Gastrocnemius medialis (tissue), 4 donors: ENCODE measurements at regions of chr1 and their contacts with region 1.

Region 1: GRCh38 chr1:171741872-171742576 is at the start of gene VAMP4:
- DNase-seq: peak; percentile 82 to 84
- ATAC-seq: peak; percentile 87
- H3K4me3 ChIP-seq: peak within 1 kb of the TSS; percentile 84 to 97 (median 94)
- H3K27ac ChIP-seq: peak within 1 kb of the TSS; percentile 95 to 99 (median 98)
- H3K4me1 ChIP-seq: peaks cover 24 to 30% of the 10 kb centered on the region in 2 donors
- H3K27me3 ChIP-seq: no peaks in the 10 kb centered on the region
- CTCF ChIP-seq: peak in 2 of 5 experiments; percentile 1 to 18
- POLR2A ChIP-seq: peak; percentile 86 to 87
- total RNA-seq, gene VAMP4: 4.6 to 11.1 (median 5.0) TPM

Region 2: DNA sequence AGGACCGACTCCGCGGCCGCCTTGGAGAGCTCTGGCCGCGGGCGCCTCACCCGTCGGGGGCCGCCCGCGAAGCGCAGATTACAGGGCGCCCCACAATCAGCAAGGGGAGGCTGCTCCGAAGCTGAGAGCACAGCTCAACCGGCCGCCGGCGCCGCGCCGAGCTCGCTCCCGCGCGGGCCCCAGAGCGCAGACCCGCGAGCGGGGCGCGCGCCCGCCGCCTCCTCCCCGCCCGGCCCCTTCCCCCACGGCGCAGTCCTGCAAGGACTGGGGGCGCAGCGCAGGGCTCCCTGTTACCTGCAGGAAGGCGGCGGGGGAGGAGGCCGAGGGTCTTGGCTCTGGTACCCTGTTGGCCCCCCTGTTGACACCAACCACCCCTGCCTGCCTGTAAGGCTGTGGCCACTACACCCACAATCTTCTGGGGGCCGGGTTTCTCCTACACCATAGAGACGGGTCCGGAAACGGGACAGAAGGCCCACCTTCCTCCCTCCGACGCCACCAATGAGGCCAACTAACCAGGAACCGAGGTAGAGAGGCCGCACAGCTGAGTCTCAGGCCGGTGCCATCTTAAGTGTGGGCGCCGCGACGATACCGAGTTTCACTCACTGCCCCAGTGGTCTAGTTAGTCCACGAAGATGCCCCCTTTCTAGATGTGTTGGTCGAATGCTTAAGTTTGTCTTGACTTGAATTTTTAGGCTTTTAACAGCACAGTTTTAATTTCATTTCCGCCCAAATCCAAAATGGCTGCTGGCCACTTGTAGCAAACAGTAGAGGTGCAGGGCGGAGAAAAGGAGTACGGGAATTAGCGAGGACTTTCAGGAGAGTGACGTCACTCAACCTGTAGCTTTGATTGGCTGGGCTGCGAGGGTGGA is 1848.3 kb before region 1 on chr1 and contains the start of gene SCYL3:
- in situ Hi-C with region 1: no loop called
- intact Hi-C with region 1: loop called (anchors 10 kb)
- DNase-seq: peak; percentile 94
- ATAC-seq: peak; percentile 98 to 99
- H3K4me3 ChIP-seq: peak within 1 kb of the TSS; percentile 74 to 99 (median 96)
- H3K27ac ChIP-seq: peak within 1 kb of the TSS; percentile 87 to 98 (median 94)
- H3K4me1 ChIP-seq: peaks cover 11 to 24% of the 10 kb centered on the region in 2 donors
- H3K27me3 ChIP-seq: peaks cover 0 to 3% (median 0%) of the 10 kb centered on the region in 3 donors
- CTCF ChIP-seq: no peak
- POLR2A ChIP-seq: peak; percentile 48 to 63
- total RNA-seq, gene SCYL3: 6.2 to 14.3 (median 12.8) TPM

Region 3: DNA sequence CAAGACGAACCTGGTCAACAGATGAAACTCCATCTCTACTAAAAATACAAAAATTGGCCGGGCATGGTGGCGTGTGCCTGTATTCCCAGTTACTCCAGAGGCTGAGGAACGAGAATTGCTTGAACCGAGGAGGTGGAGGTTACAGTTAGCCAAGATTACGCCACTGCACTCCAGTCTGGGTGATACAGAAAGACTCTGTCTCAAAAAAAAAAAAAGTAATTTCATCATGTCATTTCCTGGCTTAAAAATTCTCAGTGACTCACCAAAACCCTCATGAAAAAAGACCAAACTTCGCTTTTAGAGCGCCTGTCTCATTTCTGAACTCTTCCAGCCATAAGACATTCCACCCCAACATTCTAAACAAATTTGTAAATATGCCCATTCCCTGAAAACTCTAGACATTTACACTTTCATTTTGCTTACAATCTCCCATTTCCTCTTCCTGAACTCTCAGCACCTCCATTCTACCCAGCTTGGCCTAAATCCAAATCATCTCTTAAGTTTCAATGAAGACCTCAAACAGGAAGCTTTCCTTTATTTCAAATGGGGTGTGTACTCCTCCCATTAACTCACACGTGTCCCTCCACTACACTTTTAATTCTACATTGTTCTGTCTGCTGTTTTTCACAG is 307.2 kb before region 1 on chr1:
- in situ Hi-C with region 1: no loop called
- intact Hi-C with region 1: no loop called
- DNase-seq: peak in 1 of 2 donors; percentile 25
- ATAC-seq: peak in 1 of 2 donors; percentile 64
- H3K4me3 ChIP-seq: peak overlapping the region in 1 of 4 donors; percentile 17
- H3K27ac ChIP-seq: peak overlapping the region; percentile 1 to 56 (median 36)
- H3K4me1 ChIP-seq: no peaks in the 10 kb centered on the region
- H3K27me3 ChIP-seq: no peaks in the 10 kb centered on the region
- CTCF ChIP-seq: no peak
- POLR2A ChIP-seq: no peak

Region 4: GRCh38 chr1:171485375-171486047 is 256.5 kb before region 1 on chr1 and contains the start of gene PRRC2C:
- in situ Hi-C with region 1: loop called in 2 of 4 experiments (anchors 10 to 25 kb)
- intact Hi-C with region 1: loop called (anchors 1 kb)
- DNase-seq: peak; percentile 97
- ATAC-seq: peak; percentile 97 to 98
- H3K4me3 ChIP-seq: peak within 1 kb of the TSS; percentile 70 to 100 (median 96)
- H3K27ac ChIP-seq: peak within 1 kb of the TSS; percentile 92 to 100 (median 98)
- H3K4me1 ChIP-seq: peaks cover 39 to 42% of the 10 kb centered on the region in 2 donors
- H3K27me3 ChIP-seq: no peaks in the 10 kb centered on the region
- CTCF ChIP-seq: peak in 4 of 5 experiments; percentile 69 to 83 (median 80)
- POLR2A ChIP-seq: peak; percentile 77 to 78
- total RNA-seq, gene PRRC2C: 40.9 to 45.7 (median 42.0) TPM

Region 5: DNA sequence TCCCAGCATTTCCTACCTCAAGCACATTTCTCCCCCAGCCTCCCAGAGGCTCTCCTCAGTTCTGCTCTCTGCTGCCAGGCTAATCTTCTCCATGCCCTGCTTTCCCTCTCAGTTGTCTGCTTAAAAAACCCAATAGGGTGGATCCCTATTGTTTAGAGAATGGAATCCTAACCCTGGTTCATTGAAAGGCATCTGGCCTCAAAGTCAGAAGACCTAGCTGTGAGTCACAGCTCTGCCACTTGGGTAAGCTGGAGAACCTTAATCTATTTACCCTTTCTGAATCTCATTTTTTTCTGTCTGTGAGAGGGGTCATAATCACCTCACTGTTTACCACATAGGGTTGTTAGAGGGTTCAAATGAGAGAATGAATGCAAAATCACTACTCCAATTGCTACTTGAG is 77.0 kb before region 1 on chr1:
- in situ Hi-C with region 1: no loop called
- intact Hi-C with region 1: loop called (anchors 5 kb)
- DNase-seq: no peak
- ATAC-seq: no peak
- H3K4me3 ChIP-seq: no peak overlapping the region
- H3K27ac ChIP-seq: peak overlapping the region in 1 of 4 donors; percentile 6
- H3K4me1 ChIP-seq: peaks cover 16 to 35% of the 10 kb centered on the region in 2 donors
- H3K27me3 ChIP-seq: no peaks in the 10 kb centered on the region
- CTCF ChIP-seq: no peak
- POLR2A ChIP-seq: no peak

Region 6: GRCh38 chr1:171781176-171781875 is 39.3 kb after region 1 on chr1 and contains the start of gene METTL13:
- in situ Hi-C with region 1: loop called in 1 of 4 experiments (anchors 5 kb)
- intact Hi-C with region 1: loop called (anchors 1 kb)
- DNase-seq: peak; percentile 98
- ATAC-seq: peak; percentile 98 to 99
- H3K4me3 ChIP-seq: peak within 1 kb of the TSS; percentile 75 to 92 (median 87)
- H3K27ac ChIP-seq: peak within 1 kb of the TSS; percentile 88 to 95 (median 90)
- H3K4me1 ChIP-seq: peaks cover 34 to 35% of the 10 kb centered on the region in 2 donors
- H3K27me3 ChIP-seq: no peaks in the 10 kb centered on the region
- CTCF ChIP-seq: peak in 1 of 5 experiments; percentile 18
- POLR2A ChIP-seq: peak; percentile 82 to 90
- total RNA-seq, gene METTL13: 18.6 to 32.8 (median 23.5) TPM